ENCODE measurements at regions of chr18 and their contacts with region 1.

Region 1: GRCh38 chr18:22422909-22423548 is 5.3 kb upstream of the CTAGE1 start:
- DNase-seq: no peak
- H3K4me3 ChIP-seq: no peak overlapping the region
- H3K27ac ChIP-seq: no peak overlapping the region
- H3K4me1 ChIP-seq: no peaks in the 10 kb centered on the region
- H3K27me3 ChIP-seq: no peaks in the 10 kb centered on the region
- CTCF ChIP-seq: no peak
- EP300 ChIP-seq: no peak
- POLR2A ChIP-seq: no peak
- RAD21 ChIP-seq: no peak

Region 2: DNA sequence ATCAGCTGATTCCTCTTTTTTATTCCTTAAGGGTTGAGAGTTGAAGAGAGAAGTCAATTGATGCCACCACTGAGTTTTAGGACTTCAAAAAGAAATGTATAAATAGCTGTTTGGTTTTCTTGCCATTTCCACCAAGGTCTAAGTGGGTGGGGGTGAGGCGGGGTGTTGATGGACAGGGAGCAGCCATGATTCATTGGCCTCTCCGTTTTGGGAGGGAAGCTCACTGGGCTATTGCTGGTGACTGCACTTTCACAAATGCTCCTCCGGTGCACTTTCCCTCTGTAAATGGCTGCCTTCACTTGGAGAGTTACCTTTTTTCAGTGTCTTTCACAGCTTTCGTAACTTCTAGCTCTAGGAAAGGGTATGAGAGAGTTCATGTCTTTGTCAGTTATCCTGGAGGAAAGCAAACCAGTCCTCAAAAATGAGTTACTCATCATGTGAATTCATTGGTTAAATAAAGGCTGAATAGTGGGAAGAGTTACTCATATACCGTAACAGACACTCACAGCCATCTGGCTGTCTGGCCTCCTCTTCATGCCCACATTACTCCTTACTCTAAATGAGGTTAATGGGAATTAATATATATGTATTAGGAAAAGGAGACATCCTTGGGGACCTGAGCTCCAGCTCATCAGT is 12.1 kb after region 1 on chr18:
- CTCF ChIA-PET with region 1: interaction called, 20 read pairs
- POLR2A ChIA-PET with region 1: no interaction called
- DNase-seq: no peak
- H3K4me3 ChIP-seq: no peak overlapping the region
- H3K27ac ChIP-seq: no peak overlapping the region
- H3K4me1 ChIP-seq: no peaks in the 10 kb centered on the region
- H3K27me3 ChIP-seq: peaks cover 0 to 1% (median 0%) of the 10 kb centered on the region in 4 experiments; a peak in 1 of 7 replicates
- CTCF ChIP-seq: no peak
- EP300 ChIP-seq: no peak
- POLR2A ChIP-seq: no peak
- RAD21 ChIP-seq: no peak

Measured in H1 (cell line).